Caco-2 (cell line): ENCODE measurements at regions of chr17 and their contacts with region 1.

Region 1: DNA sequence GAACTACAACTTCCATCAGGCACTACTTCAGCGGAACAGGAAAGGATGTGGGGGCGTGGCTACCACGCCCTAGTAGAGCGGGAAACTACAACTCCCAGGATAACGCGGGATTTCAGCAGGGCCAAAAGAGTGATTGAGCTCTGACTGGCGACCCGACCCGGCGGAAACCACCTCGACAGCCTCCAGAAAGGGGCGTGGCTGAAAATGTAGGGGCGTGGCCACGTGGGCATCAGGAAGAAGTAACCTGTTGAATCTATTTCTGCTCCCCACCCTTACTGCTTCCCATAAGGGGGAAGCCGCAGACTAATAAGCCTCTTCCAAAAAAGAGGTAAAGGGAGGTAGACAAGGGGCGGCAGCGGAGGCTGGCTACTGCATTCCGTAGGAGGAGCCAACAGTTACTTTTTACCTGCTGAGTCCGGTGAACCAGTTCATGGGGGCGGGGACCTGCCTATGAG is at the start of gene TMEM102:
- DNase-seq: peak; percentile 92 to 94
- H3K4me3 ChIP-seq: peak within 1 kb of the TSS; percentile 55
- H3K4me3 Mint-ChIP-seq: peak within 1 kb of the TSS; percentile 81
- H3K27ac Mint-ChIP-seq: peak within 1 kb of the TSS; percentile 95
- H3K4me1 ChIP-seq: no peaks in the 10 kb centered on the region
- H3K4me1 Mint-ChIP-seq: peaks cover 6% of the 10 kb centered on the region
- H3K27me3 ChIP-seq: no peaks in the 10 kb centered on the region
- H3K27me3 Mint-ChIP-seq: no peaks in the 10 kb centered on the region
- CTCF ChIP-seq: no peak
- total RNA-seq, gene TMEM102: 2.9 and 3.7 TPM in 2 replicates

Region 2: DNA sequence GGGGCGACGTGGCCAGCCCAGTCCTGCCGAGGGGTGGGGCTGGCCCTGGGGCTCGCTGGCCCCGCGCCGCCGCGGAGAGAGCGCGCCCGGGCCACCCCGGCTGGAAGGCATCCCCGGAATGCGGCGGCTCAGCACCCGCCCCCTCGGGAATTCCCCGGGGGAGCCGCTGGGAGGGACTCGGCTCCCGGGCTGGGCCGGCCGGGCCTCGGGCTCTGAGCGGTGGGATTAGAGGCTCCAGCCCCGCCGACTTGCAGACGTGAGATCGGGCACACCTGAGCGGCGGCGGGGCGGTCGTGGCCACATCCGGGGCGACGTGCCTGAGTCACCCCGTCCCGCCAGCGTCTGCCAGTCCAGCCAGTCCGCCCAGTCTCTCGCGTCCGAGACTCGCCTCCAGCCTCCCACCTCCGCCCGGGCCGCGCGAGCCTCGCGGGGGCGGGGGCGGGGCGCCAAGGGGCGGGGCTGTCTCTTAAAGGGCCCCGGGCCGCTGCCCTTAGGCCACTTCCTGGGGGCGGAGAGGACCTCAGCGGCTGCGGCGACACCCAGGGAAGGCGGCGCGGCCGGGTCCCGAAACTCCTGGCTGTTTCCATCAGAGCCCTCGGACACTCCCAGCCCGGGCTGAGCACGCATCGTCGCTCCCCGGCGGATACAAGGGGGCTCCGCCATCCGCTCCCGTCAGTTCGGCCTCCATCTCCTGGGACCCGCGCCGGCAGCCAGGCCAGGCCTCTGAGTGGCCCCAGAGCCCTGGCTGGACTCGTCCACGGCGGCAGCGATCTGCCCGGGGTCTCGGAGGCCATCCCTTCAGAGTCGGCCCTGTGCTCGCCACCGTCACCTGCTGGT is 83.4 kb before region 1 on chr17 and contains the start of gene KCTD11:
- CTCF ChIA-PET with region 1: interaction called, 8 read pairs
- POLR2A ChIA-PET with region 1: interaction called, 3 read pairs
- intact Hi-C with region 1: loop called (anchors 5 kb)
- DNase-seq: peak; percentile 88 to 90
- H3K4me3 ChIP-seq: peak within 1 kb of the TSS; percentile 63
- H3K4me3 Mint-ChIP-seq: peak within 1 kb of the TSS; percentile 83
- H3K27ac Mint-ChIP-seq: peak within 1 kb of the TSS; percentile 88
- H3K4me1 ChIP-seq: peaks cover 3% of the 10 kb centered on the region; the same call in 1 of the 2 replicates
- H3K4me1 Mint-ChIP-seq: peaks cover 11% of the 10 kb centered on the region
- H3K27me3 ChIP-seq: no peaks in the 10 kb centered on the region
- H3K27me3 Mint-ChIP-seq: no peaks in the 10 kb centered on the region
- CTCF ChIP-seq: peak in 1 of 2 experiments; percentile 37
- total RNA-seq, gene KCTD11: 5.1 and 5.4 TPM in 2 replicates

Region 3: DNA sequence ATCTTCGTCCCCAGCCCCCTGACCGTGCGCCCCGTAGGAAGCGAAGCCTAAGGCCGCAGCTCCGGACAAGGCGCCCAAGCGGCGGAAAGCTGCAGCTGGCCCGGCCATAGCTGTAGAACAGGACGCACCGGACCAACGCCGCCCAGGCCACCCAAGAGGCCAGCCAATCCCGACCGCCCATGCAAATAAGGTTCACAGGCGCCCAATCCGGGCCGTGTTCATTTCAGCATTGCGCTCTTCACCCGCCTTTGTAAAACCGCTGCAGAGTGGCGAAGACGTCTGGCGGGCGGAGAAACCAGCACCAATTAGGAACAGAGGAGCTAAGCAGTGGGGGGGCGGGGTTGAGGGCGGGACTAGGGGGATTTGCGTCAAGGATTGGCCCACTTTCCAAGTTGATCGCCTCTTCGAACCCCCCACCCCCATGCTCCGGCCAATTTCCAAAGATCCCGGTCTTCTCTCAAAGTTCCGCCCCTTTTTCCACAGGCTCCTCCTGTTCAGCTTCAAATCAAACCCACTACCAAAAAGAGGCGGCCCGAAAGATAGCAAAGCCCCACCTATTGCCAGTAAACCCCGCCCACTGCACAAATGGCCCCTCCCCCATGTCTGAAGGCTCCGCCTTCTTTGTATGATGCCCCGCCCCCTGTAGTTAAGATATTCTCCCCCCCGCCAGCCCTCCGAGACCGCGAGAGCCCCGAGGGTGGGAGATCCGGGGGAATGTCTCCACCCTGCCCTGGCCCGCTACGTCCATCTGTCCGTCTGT is 31.1 kb before region 1 on chr17 and contains the start of gene TMEM256:
- CTCF ChIA-PET with region 1: interaction called, 15 read pairs
- POLR2A ChIA-PET with region 1: interaction called, 38 read pairs
- intact Hi-C with region 1: loop called (anchors 1 kb)
- DNase-seq: peak; percentile 93 to 96
- H3K4me3 ChIP-seq: peak within 1 kb of the TSS; percentile 53
- H3K4me3 Mint-ChIP-seq: peak within 1 kb of the TSS; percentile 76
- H3K27ac Mint-ChIP-seq: peak within 1 kb of the TSS; percentile 76
- H3K4me1 ChIP-seq: no peaks in the 10 kb centered on the region
- H3K4me1 Mint-ChIP-seq: peaks cover 8% of the 10 kb centered on the region
- H3K27me3 ChIP-seq: no peaks in the 10 kb centered on the region
- H3K27me3 Mint-ChIP-seq: no peaks in the 10 kb centered on the region
- CTCF ChIP-seq: no peak
- total RNA-seq, gene TMEM256: 40.2 and 41.3 TPM in 2 replicates

Region 4: DNA sequence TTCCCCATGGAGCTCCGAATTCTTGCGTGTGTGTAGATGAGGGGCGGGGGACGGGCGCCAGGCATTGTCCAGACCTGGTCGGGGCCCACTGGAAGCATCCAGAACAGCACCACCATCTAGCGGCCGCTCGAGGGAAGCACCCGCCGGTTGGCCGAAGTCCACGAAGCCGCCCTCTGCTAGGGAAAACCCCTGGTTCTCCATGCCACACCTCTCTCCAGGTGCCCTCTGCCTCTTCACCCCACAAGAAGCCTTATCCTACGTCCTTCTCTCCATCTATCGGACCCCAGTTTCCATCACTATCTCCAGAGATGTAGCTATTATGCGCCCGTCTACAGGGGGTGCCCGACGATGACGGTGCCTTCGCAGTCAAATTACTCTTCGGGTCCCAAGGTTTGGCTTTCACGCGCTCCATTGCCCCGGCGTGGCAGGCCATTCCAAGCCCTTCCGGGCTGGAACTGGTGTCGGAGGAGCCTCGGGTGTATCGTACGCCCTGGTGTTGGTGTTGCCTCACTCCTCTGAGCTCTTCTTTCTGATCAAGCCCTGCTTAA is 125.9 kb after region 1 on chr17:
- CTCF ChIA-PET with region 1: interaction called, 21 read pairs
- POLR2A ChIA-PET with region 1: no interaction called
- intact Hi-C with region 1: loop called (anchors 1 kb)
- DNase-seq: peak; percentile 81 to 85
- H3K4me3 ChIP-seq: peak overlapping the region; percentile 60
- H3K4me3 Mint-ChIP-seq: peak overlapping the region; percentile 86
- H3K27ac Mint-ChIP-seq: peak overlapping the region; percentile 75
- H3K4me1 ChIP-seq: peaks cover 4% of the 10 kb centered on the region; the same call in 1 of the 2 replicates
- H3K4me1 Mint-ChIP-seq: no peaks in the 10 kb centered on the region
- H3K27me3 ChIP-seq: no peaks in the 10 kb centered on the region
- H3K27me3 Mint-ChIP-seq: no peaks in the 10 kb centered on the region
- CTCF ChIP-seq: peak; percentile 64 to 78